Calu3 (cell line): ENCODE measurements at regions of chr12 and their contacts with region 1.

Region 1: DNA sequence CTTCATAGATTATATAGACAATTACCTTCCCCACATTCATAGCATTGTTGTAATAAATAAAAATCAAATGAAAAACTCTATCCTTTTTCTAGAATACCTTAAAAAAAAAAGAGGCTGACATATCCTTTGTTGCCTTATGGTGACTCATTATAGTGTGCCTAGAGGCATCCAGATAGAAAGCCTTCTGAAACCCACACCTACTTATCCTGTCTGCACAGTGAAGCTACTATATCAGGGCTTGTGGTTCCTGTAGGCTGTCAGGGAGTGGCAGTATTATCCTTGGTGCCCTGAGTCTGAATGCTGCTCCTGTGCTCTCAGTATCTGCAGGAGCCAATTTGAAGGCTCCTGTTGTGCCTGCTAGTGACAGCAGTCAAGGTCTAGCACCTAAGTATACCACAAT is 168.3 kb upstream of the AVPR1A start:
- DNase-seq: peak; percentile 55
- H3K4me3 Mint-ChIP-seq: no peak overlapping the region
- H3K27ac Mint-ChIP-seq: no peak overlapping the region
- H3K4me1 Mint-ChIP-seq: peaks cover 26% of the 10 kb centered on the region
- H3K27me3 Mint-ChIP-seq: no peaks in the 10 kb centered on the region
- CTCF ChIP-seq: peak; percentile 16

Region 2: DNA sequence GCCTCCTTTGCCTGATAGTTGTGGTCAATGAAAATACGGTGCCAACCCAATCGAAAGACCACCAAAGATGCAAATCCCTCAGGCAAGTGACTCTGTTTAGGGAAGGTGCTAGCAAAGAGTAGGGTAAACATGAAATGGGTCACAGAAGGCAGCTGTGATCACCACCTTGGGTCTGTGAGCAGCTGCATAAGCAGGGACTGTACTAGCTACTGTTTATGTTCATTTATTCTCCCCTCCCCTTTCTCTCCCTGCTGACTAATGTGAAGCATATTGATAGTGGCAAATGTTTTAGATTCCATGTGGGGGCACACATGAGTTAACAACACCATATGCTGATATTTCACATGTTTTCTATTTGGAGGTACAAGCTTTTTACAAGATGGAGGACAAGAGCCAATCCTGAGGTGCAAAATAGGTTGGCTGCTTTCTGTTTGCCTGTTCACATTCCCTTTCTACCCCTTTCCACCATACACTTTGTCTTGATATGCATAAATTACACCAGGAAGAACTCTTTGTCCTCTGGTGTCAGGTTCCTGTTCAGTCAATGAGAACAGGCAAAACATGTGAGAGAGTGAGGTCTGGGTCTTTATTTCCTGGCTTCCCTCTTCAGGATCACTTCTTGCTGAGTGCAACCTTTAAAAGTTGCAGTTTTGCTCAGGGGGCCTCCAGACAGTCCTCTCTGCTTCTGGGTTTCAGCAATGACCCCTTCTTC is 239.4 kb before region 1 on chr12:
- CTCF ChIA-PET with region 1: no interaction called
- intact Hi-C with region 1: no loop called
- DNase-seq: no peak
- H3K4me3 Mint-ChIP-seq: no peak overlapping the region
- H3K27ac Mint-ChIP-seq: no peak overlapping the region
- H3K4me1 Mint-ChIP-seq: no peaks in the 10 kb centered on the region
- H3K27me3 Mint-ChIP-seq: no peaks in the 10 kb centered on the region
- CTCF ChIP-seq: no peak

Region 3: DNA sequence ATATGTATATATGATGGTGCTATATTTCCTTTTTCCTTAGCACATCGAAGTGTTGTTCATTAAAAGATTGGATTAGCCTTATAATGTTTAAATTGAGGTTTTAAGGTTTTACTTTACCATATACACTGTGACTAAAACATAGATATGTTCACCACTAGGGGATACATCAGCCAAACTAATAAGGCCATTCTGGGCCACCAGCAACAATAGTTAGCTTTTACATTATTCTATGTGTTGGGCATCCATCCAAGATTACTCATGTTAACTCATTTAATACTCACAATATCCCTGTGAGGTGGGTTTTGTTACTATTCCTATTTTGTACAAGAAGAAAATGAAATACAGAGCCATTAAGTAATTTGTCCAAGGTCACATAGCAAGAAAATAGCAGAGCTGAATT is 34.2 kb after region 1 on chr12:
- CTCF ChIA-PET with region 1: interaction called, 9 read pairs
- intact Hi-C with region 1: loop called (anchors 2 kb)
- DNase-seq: no peak
- H3K4me3 Mint-ChIP-seq: no peak overlapping the region
- H3K27ac Mint-ChIP-seq: peak overlapping the region; percentile 69
- H3K4me1 Mint-ChIP-seq: peaks cover 40% of the 10 kb centered on the region
- H3K27me3 Mint-ChIP-seq: no peaks in the 10 kb centered on the region
- CTCF ChIP-seq: peak; percentile 32

Region 4: DNA sequence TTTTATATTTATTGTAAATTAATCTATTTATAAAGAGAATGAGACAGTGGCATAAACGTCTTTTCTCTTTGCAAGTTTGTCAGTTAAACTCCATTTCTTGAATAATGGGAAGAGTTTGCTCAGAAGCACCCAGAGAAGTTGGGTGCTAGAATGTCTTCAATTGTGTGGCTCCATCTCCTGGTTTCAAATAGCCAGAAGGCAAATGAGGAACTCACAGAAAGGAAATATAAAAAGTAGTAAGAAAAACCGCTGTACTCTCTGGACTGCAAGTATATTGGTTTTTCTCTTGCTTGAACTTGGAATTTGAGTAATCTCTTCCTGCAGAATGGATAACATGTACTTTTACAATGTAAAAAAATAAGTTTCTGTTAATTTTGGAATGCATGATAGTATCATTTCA is 131.5 kb after region 1 on chr12:
- CTCF ChIA-PET with region 1: interaction called, 5 read pairs
- intact Hi-C with region 1: loop called (anchors 2 kb)
- DNase-seq: no peak
- H3K4me3 Mint-ChIP-seq: no peak overlapping the region
- H3K27ac Mint-ChIP-seq: no peak overlapping the region
- H3K4me1 Mint-ChIP-seq: no peaks in the 10 kb centered on the region
- H3K27me3 Mint-ChIP-seq: no peaks in the 10 kb centered on the region
- CTCF ChIP-seq: no peak

Region 5: DNA sequence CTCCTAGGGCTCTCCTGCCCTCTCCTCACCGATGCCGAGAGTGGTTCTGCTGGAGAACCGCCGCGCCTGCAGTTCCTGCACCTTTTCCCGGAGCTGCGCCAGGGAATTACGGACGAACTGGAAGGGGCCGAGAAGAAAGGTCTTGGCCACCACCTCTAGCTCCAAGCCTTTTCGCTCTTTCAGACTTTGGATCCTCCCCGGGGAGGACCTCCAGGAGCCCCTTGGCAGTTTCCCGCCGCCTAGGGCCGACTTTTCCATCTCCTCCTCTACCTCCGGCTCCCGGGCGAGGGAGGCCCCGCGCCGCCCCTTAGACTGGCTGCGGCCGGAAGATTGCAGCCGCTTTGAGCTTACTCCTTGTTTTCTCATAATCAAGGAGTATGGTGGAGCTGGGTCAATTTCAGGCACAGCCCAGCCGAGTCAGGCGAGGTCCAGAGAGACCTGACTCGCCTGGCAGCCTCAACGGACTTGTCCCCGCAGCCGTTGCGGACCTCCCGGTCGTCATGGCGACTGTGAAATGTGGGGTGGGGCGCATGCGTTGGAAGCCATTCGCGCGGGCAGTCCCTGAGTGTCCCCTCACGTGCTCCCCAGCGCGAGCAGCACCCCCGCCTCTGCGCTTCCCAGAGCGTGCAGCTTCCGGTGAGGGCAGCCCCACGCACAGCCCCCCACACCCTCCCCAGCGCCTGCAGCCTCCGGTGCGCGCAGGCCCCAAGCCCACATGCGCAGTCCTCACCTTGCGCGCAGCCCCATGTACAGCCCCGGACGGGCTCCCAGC is 348.9 kb after region 1 on chr12 and contains the start of gene DPY19L2:
- CTCF ChIA-PET with region 1: interaction called, 6 read pairs
- intact Hi-C with region 1: loop called (anchors 2 kb)
- DNase-seq: peak; percentile 81
- H3K4me3 Mint-ChIP-seq: peak within 1 kb of the TSS; percentile 74
- H3K27ac Mint-ChIP-seq: peak within 1 kb of the TSS; percentile 61
- H3K4me1 Mint-ChIP-seq: peaks cover 26% of the 10 kb centered on the region
- H3K27me3 Mint-ChIP-seq: peaks cover 13% of the 10 kb centered on the region
- CTCF ChIP-seq: no peak
- total RNA-seq, gene DPY19L2: 9.2 and 10.1 TPM in 2 replicates

Region 6: DNA sequence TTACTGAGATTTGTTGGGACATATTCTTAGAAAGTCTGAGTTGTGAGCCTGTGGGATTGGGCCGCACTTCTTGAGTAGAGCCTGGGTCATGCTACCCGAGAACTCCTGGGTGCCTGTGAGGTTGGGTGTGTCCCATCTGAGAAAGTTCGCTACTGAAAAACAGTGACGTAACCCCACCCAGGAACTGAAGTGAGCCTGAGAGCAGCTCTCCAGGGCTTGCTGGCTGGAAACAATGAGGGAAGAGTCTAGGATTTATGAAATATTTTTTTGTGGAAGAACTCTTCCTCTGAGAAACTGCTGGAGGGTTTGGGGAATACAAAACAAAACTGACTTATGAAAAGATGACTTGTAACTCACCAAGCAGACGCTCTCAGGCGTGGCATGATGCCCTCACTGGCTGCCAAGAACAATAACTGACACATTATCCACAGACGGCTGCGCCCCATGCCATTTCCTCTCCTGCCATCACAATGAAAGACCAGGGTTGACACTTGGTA is 1360.2 kb after region 1 on chr12:
- CTCF ChIA-PET with region 1: no interaction called
- intact Hi-C with region 1: no loop called
- DNase-seq: peak; percentile 71
- H3K4me3 Mint-ChIP-seq: peak overlapping the region; percentile 59
- H3K27ac Mint-ChIP-seq: peak overlapping the region; percentile 82
- H3K4me1 Mint-ChIP-seq: peaks cover 77% of the 10 kb centered on the region
- H3K27me3 Mint-ChIP-seq: no peaks in the 10 kb centered on the region
- CTCF ChIP-seq: no peak